WTC11 (cell line): ENCODE measurements at regions of chr1 and their contacts with region 1.

Region 1: GRCh38 chr1:225888898-225889601 is at the start of gene LEFTY1:
- DNase-seq: peak; percentile 42
- ATAC-seq: peak; percentile 50
- H3K4me3 Mint-ChIP-seq: peak within 1 kb of the TSS; percentile 69
- H3K27ac Mint-ChIP-seq: peak within 1 kb of the TSS; percentile 78
- H3K4me1 Mint-ChIP-seq: peaks cover 43% of the 10 kb centered on the region
- H3K27me3 Mint-ChIP-seq: no peaks in the 10 kb centered on the region; the same call in 1 of the 2 replicates
- CTCF ChIP-seq: no peak
- total RNA-seq, gene LEFTY1: 47.0 to 52.9 TPM (median 49.0 TPM) in 3 replicates

Region 2: DNA sequence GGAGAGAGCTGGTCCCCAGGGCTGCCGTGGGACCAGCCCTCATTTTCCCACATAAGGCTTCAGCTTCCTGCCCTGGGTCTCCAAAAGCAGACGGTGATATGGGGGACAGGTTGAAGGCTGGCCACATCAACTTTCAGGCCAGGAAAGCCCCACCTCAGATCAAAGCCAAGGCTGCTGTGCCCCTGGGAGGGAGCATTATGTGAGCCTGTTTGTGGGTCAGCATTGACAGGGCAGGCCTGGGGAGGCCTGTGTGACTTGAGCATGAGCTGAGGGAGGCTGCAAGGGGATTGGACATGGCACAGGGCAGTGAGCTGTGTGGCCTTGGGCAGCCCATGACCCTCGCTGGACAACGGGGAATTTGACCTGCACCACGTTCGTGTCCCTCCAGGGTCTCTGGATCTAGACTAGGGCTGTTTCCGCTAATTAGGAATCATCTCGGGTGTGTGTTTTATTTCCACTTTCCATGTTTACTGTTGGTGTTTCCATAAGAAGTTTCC is 17.4 kb after region 1 on chr1:
- CTCF ChIA-PET with region 1: interaction called, 21 read pairs
- POLR2A ChIA-PET with region 1: interaction called, 3 read pairs
- DNase-seq: no peak
- ATAC-seq: no peak
- H3K4me3 Mint-ChIP-seq: no peak overlapping the region
- H3K27ac Mint-ChIP-seq: no peak overlapping the region
- H3K4me1 Mint-ChIP-seq: peaks cover 23% of the 10 kb centered on the region
- H3K27me3 Mint-ChIP-seq: peaks cover 27% of the 10 kb centered on the region
- CTCF ChIP-seq: no peak